HAP-1 (cell line): ENCODE measurements at regions of chr1 and their contacts with region 1.

Region 1: DNA sequence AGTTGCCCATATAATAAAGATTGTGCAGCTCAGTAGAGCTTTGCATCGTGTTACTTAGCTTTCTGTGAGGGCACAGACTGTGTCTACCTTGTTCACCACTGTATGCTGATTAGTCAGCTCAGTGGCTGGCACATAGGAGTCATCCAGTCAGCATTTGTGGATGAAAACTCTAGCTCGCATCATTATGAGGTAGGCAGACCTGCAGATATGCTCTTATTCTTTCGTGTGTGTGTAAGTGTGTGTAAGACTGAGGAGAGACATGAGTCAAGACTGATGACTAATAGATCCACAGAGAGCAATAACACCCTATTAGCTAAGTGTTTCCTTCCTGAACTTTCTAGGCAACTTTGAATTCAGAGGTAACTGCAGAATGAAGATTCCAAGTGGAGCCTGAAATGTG is 17.1 kb downstream of the TTF2 start:
- DNase-seq: no peak
- H3K4me3 ChIP-seq: no peak overlapping the region
- H3K4me1 ChIP-seq: no peaks in the 10 kb centered on the region
- H3K27me3 ChIP-seq: no peaks in the 10 kb centered on the region

Region 2: DNA sequence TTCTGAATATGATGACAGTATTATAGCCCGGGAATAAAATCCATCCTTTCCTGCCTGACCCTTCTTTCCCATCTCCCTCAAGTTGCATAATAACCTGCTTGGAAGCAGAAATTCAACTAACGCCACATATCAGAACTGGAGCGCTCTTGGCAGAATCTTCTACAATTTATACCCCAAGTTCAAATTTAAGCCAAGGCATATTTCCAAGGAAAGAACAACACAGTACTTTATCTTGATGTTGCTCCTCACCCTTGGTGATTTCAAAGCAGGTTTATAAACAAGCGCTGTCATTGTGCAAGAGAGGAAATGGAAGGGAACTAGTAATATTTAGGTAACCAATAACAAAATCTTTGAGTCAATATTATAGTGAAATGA is 205.5 kb before region 1 on chr1:
- in situ Hi-C with region 1: no loop called
- DNase-seq: no peak
- H3K4me3 ChIP-seq: no peak overlapping the region
- H3K4me1 ChIP-seq: peaks cover under 1% of the 10 kb centered on the region
- H3K27me3 ChIP-seq: no peaks in the 10 kb centered on the region

Region 3: GRCh38 chr1:117284399-117285215 is 207.3 kb after region 1 on chr1:
- in situ Hi-C with region 1: loop called (anchors 10 kb)
- DNase-seq: peak; percentile 19 to 68
- H3K4me3 ChIP-seq: no peak overlapping the region
- H3K4me1 ChIP-seq: no peaks in the 10 kb centered on the region
- H3K27me3 ChIP-seq: no peaks in the 10 kb centered on the region